ENCODE measurements at regions of chr3 and their contacts with region 1.

Region 1: DNA sequence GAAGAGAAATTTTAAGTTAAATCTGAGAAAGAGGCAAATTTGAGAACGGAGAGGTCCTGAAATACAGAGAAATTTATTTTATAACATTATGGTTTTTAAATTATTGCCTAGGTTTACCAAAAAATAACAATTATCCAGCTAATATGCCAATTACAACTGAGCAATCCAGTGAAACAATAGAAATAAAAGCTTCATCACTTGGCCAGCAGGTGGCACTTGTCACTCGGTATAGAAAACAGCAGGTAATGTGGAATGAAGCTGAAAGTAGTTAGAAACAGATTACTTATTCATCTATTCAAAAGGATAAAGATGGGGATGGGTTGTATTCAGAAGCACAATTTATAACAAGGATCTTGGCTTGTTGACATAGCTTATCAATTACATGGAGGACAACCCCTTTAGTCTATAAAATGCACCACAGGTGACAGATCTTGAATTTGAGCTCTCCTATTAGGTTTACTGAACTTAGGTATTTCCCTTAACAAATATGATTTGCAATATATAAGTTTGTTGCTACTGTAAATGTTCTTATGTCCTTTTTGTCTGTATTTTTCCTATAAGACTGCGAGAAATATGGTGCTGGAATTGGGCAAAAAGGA is 70.1 kb upstream of the GUCA1C start:
- DNase-seq: peak; percentile 55
- H3K4me3 Mint-ChIP-seq: no peak overlapping the region
- H3K27ac Mint-ChIP-seq: no peak overlapping the region
- H3K4me1 Mint-ChIP-seq: no peaks in the 10 kb centered on the region
- H3K27me3 Mint-ChIP-seq: no peaks in the 10 kb centered on the region
- CTCF ChIP-seq: peak; percentile 71

Region 2: GRCh38 chr3:108849075-108849474 is 174.7 kb before region 1 on chr3:
- CTCF ChIA-PET with region 1: no interaction called
- POLR2A ChIA-PET with region 1: no interaction called
- intact Hi-C with region 1: no loop called
- DNase-seq: no peak
- H3K4me3 Mint-ChIP-seq: no peak overlapping the region
- H3K27ac Mint-ChIP-seq: no peak overlapping the region
- H3K4me1 Mint-ChIP-seq: no peaks in the 10 kb centered on the region
- H3K27me3 Mint-ChIP-seq: no peaks in the 10 kb centered on the region
- CTCF ChIP-seq: no peak

Region 3: DNA sequence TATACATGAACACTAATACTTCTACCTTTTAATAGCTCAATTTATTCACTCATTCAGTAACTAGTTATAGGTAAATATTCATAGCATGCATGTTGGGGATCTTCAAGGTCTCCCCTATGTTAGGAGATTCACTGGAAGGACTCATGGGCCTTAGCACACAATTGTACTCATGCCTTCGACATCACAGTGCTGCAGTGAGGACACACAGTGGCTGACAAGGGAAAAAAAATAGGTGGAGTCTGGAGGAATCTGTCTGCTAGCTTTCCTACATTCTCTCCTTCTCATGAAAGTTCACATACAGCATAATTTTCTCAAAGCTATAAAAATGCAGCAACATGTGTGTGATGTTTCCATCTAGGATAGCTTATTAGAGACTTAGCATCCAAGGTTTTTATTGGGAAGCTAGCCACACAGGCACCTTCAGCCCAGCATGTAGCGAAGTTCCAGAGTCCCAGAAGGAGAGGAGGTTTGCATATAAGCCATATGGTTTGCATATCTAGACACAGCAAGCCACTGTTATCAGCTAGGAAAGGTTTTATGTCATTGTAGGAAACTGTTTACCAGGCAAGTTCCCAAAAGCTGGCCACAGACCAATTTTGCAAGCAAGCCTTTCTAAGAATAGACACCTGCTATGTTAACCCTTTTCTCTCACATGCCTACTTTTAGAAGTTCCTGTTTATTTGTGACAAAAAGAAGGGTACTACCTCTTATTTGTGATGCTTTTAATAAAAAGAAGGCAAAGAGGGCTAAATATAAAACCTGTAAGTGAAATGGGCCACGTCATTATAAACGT is 47.8 kb after region 1 on chr3:
- CTCF ChIA-PET with region 1: interaction called, 20 read pairs
- POLR2A ChIA-PET with region 1: no interaction called
- intact Hi-C with region 1: no loop called
- DNase-seq: peak; percentile 13
- H3K4me3 Mint-ChIP-seq: no peak overlapping the region
- H3K27ac Mint-ChIP-seq: no peak overlapping the region
- H3K4me1 Mint-ChIP-seq: no peaks in the 10 kb centered on the region
- H3K27me3 Mint-ChIP-seq: no peaks in the 10 kb centered on the region
- CTCF ChIP-seq: no peak

Region 4: DNA sequence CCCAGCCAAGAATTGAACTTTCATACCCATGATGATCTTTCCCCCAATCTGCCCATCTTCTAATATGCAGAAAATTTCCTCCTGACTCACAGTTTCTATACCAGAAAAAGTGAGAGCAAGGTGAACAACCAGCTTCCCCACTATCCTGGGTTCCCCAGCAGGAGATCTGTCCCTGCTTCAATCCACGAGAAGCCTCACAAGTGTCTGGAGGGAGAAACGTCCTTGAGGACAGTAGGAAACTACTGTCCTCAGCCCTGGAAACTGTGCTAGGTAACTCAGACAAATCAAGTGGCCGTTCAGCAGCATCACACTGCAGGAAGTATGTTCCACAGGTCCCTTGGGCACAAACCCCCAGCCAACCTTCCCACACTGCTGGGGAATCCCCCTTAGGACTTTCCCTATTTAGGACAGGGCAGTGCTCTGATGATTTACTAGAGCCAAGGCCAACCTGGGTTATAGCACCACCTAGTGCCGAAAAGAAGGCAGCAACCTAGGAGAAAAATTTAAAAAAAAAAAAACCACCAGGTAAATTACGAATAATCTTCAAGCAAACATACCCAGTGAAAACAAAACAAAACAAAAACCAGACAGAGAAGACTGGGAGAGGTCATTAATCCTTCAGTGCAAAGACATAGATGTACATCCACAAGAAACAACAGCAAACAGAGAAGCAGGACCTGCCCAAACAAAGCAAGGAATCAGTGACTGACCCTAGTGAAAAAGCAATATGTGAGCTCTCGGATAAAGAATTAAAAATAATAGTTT is 58.2 kb after region 1 on chr3:
- CTCF ChIA-PET with region 1: interaction called, 45 read pairs
- POLR2A ChIA-PET with region 1: no interaction called
- intact Hi-C with region 1: loop called (anchors 1 kb)
- DNase-seq: peak; percentile 71
- H3K4me3 Mint-ChIP-seq: no peak overlapping the region
- H3K27ac Mint-ChIP-seq: peak overlapping the region; percentile 55
- H3K4me1 Mint-ChIP-seq: peaks cover 6% of the 10 kb centered on the region
- H3K27me3 Mint-ChIP-seq: no peaks in the 10 kb centered on the region
- CTCF ChIP-seq: peak; percentile 75

Region 5: DNA sequence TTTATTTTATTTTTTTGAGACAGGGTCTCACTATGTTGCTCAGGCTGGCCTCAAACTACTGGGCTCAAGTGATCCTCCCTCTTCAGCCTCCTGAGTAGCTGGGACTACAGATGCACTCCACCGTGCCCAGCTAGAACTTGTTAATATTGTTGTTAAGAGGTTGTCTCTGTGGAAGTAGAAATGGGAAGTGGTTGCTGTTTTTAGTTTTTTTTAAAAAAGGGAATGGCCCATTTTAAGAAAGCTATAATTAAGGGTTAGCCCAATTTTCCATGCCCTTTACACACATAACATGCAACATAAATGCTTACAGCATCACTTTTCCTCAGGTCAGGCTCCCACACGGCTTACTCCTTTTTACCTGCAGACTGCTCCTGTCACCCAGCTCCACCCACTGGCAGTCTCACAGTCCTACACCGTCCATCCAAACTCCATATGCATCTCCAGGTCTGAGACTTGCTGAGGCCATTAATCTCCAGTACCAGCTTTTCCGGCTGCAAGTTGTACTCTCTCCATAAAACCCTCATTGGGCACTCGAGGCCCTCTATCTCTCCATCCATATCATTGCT is 74.4 kb after region 1 on chr3:
- CTCF ChIA-PET with region 1: interaction called, 17 read pairs
- POLR2A ChIA-PET with region 1: no interaction called
- intact Hi-C with region 1: no loop called
- DNase-seq: peak; percentile 42
- H3K4me3 Mint-ChIP-seq: no peak overlapping the region
- H3K27ac Mint-ChIP-seq: no peak overlapping the region
- H3K4me1 Mint-ChIP-seq: no peaks in the 10 kb centered on the region
- H3K27me3 Mint-ChIP-seq: no peaks in the 10 kb centered on the region
- CTCF ChIP-seq: peak; percentile 47

Region 6: DNA sequence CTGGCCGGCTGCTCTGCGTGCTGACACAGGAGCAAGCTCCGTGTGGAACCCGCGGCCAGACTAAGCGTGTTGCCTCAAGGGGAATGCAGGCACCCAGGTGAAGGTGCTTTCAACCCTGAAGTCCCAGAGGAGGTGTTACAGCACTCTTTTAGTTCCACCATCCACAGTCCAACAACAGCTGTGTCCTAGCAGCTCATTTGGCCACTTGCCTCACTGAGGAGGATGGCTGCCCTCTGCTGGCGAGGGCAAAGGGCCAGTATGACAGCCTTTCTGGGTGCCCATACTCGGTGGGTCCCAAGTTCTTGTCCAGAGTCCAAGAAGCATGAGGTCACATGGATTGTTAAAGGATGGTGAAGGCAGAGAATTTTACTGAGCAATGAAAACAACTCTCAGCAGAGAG is 200.6 kb after region 1 on chr3:
- CTCF ChIA-PET with region 1: interaction called, 11 read pairs
- POLR2A ChIA-PET with region 1: no interaction called
- intact Hi-C with region 1: loop called (anchors 1 kb)
- DNase-seq: peak; percentile 47
- H3K4me3 Mint-ChIP-seq: no peak overlapping the region
- H3K27ac Mint-ChIP-seq: no peak overlapping the region
- H3K4me1 Mint-ChIP-seq: no peaks in the 10 kb centered on the region
- H3K27me3 Mint-ChIP-seq: no peaks in the 10 kb centered on the region
- CTCF ChIP-seq: peak; percentile 14

Region 7: GRCh38 chr3:109396806-109397205 is 373.1 kb after region 1 on chr3:
- CTCF ChIA-PET with region 1: interaction called, 5 read pairs
- POLR2A ChIA-PET with region 1: no interaction called
- intact Hi-C with region 1: loop called (anchors 1 kb)
- DNase-seq: no peak
- H3K4me3 Mint-ChIP-seq: no peak overlapping the region
- H3K27ac Mint-ChIP-seq: no peak overlapping the region
- H3K4me1 Mint-ChIP-seq: no peaks in the 10 kb centered on the region
- H3K27me3 Mint-ChIP-seq: no peaks in the 10 kb centered on the region
- CTCF ChIP-seq: no peak